ENCODE measurements at regions of chr11 and their contacts with region 1.

Region 1: GRCh38 chr11:14300661-14301304 is 58.2 kb downstream of the RRAS2 start:
- DNase-seq: peak in 8 of 10 donors; percentile 32 to 78 (median 60)
- H3K4me3 ChIP-seq: peak overlapping the region in 2 of 59 donors; percentile 5 to 13
- H3K27ac ChIP-seq: no peak overlapping the region
- H3K27me3 ChIP-seq: no peaks in the 10 kb centered on the region
- CTCF ChIP-seq: peak; percentile 61 to 91 (median 80)

Region 2: DNA sequence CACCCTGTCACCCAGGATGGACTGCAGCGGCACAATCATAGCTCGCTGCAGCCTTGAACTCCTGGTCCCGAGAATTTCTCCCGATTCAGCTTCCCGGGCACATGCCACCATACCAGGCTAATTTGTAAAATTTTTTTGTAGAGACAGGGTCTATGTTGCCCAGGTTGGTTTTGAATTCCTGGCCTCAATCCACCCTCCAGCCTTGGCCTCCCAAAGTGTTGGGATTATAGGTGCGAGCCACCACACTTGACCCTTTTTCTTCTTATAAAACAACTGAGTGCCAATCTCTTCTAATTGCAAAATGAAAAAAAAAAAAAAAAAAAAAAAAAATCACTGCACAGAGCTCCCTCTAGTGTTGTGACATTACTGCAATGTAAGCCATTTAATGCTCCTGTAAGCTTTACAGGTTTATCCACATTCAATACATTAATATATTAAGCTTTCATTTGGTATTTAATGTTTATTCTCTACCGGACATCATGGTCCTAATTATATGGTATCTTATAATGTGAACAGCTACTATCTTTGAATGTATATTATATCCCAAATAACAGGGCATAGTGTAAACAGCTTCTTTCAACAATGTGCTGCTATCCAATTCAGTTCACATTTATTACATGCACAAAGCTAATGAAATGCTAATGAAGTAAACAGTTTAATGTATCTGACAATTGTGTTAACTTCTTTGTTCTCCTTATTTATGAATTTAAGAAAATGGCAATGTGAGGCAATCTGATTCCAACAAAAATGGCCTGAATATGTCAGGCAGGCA is 154.3 kb after region 1 on chr11:
- intact Hi-C with region 1: loop called (anchors 2 kb)
- DNase-seq: no peak
- H3K4me3 ChIP-seq: no peak overlapping the region
- H3K27ac ChIP-seq: peak overlapping the region in 8 of 59 donors; percentile 2 to 26 (median 13)
- H3K27me3 ChIP-seq: no peaks in the 10 kb centered on the region
- CTCF ChIP-seq: peak; percentile 48 to 87 (median 68)

Region 3: DNA sequence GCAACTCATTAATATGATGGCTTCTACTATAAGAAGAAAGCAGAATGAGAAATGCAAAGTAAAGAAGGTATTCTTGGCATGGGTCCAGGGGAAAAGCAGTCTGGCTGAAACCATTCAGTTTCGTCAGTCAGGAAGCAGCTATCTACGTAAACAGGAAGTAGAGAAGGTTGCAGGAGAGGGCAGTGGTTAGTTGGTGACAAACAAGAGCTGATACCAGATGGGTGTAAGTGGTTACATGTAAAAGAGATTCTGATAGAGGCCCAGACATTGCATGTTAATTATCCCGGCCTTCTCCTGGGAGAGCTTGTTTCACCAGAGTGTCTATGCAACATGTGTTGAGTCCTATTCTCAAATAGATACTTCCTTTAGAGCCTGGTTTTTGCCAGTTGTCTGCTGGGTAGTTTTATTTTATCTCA is 277.8 kb after region 1 on chr11:
- intact Hi-C with region 1: no loop called
- DNase-seq: no peak
- H3K4me3 ChIP-seq: no peak overlapping the region
- H3K27ac ChIP-seq: peak overlapping the region in 4 of 59 donors; percentile 8 to 56 (median 27)
- H3K27me3 ChIP-seq: no peaks in the 10 kb centered on the region
- CTCF ChIP-seq: no peak